CD4-positive, alpha-beta memory T cell (primary cell): ENCODE measurements at regions of chr7 and their contacts with region 1.

Region 1: GRCh38 chr7:148940702-148941597 is 56.9 kb upstream of the EZH2 start:
- DNase-seq: peak; percentile 75 to 84 (median 80)
- H3K4me3 ChIP-seq: peak overlapping the region; percentile 54 to 75
- H3K4me3 Mint-ChIP-seq: peak overlapping the region; percentile 93 to 97 (median 96)
- H3K27ac ChIP-seq: peak overlapping the region; percentile 90
- H3K27ac Mint-ChIP-seq: peak overlapping the region; percentile 91 to 99 (median 98)
- H3K4me1 ChIP-seq: peaks cover 21% of the 10 kb centered on the region
- H3K4me1 Mint-ChIP-seq: peaks cover 6 to 25% (median 13%) of the 10 kb centered on the region in 4 donors
- H3K27me3 ChIP-seq: no peaks in the 10 kb centered on the region
- H3K27me3 Mint-ChIP-seq: no peaks in the 10 kb centered on the region

Region 2: GRCh38 chr7:148856891-148857290 is 84.1 kb before region 1 on chr7:
- CTCF ChIA-PET with region 1: interaction called, 34 read pairs
- POLR2A ChIA-PET with region 1: interaction called, 5 read pairs
- intact Hi-C with region 1: loop called (anchors 1 kb)
- DNase-seq: no peak
- H3K4me3 ChIP-seq: no peak overlapping the region
- H3K4me3 Mint-ChIP-seq: no peak overlapping the region
- H3K27ac ChIP-seq: no peak overlapping the region
- H3K27ac Mint-ChIP-seq: no peak overlapping the region
- H3K4me1 ChIP-seq: peaks cover 20% of the 10 kb centered on the region
- H3K4me1 Mint-ChIP-seq: peaks cover 11 to 21% (median 16%) of the 10 kb centered on the region in 4 donors
- H3K27me3 ChIP-seq: no peaks in the 10 kb centered on the region
- H3K27me3 Mint-ChIP-seq: no peaks in the 10 kb centered on the region

Region 3: GRCh38 chr7:148898845-148899484 is 42.0 kb before region 1 on chr7:
- CTCF ChIA-PET with region 1: no interaction called
- POLR2A ChIA-PET with region 1: no interaction called
- intact Hi-C with region 1: no loop called
- DNase-seq: no peak
- H3K4me3 ChIP-seq: no peak overlapping the region
- H3K4me3 Mint-ChIP-seq: no peak overlapping the region
- H3K27ac ChIP-seq: no peak overlapping the region
- H3K27ac Mint-ChIP-seq: peak overlapping the region in 1 of 7 donors; percentile 15
- H3K4me1 ChIP-seq: no peaks in the 10 kb centered on the region
- H3K4me1 Mint-ChIP-seq: no peaks in the 10 kb centered on the region
- H3K27me3 ChIP-seq: no peaks in the 10 kb centered on the region
- H3K27me3 Mint-ChIP-seq: peaks cover 0 to 2% of the 10 kb centered on the region in 2 donors

Region 4: GRCh38 chr7:148914208-148914777 is 26.7 kb before region 1 on chr7:
- CTCF ChIA-PET with region 1: interaction called, 7 read pairs
- POLR2A ChIA-PET with region 1: interaction called, 39 read pairs
- intact Hi-C with region 1: loop called (anchors 1 kb)
- DNase-seq: peak in 2 of 5 donors; percentile 12 to 58
- H3K4me3 ChIP-seq: peak overlapping the region; percentile 31 to 32
- H3K4me3 Mint-ChIP-seq: peak overlapping the region in 7 of 8 donors; percentile 37 to 85 (median 81)
- H3K27ac ChIP-seq: peak overlapping the region; percentile 56
- H3K27ac Mint-ChIP-seq: peak overlapping the region; percentile 63 to 96 (median 90)
- H3K4me1 ChIP-seq: peaks cover 52% of the 10 kb centered on the region
- H3K4me1 Mint-ChIP-seq: peaks cover 37 to 60% (median 48%) of the 10 kb centered on the region in 4 donors
- H3K27me3 ChIP-seq: no peaks in the 10 kb centered on the region
- H3K27me3 Mint-ChIP-seq: no peaks in the 10 kb centered on the region

Region 5: DNA sequence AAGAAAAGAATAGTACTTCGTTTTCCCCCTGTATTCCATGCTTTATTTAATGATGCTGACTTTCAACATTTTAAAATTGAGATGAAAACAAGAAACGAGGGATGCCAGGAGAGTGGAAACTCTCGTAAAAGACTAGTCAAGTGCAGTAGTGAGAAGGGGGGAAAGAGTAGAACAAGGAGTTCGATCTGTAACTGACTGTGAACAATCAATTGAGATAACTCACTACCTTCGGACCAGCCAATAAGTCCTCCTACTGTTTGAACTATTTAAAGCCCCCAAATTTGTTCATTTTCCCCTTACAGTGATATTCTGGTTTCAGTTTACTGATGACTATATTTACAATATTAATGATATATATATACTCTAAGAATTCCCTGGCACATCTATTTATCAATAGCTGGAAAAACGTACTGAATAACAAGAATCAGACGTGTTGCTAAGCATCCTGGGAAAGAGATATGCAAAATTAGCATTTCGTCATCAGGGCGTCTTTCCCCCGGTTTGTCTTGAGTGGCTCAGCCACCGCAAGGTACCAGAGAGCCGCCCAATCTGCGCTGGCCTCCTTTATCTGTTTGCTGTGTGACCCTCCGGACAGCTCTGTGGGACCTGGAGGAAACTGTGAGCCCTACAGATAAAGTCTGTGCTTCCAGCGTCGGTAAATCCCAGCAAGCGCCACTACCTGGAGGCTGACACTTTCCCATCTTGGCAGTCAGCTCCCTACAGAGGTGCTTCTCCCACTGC is 46.2 kb after region 1 on chr7:
- CTCF ChIA-PET with region 1: interaction called, 7 read pairs
- POLR2A ChIA-PET with region 1: interaction called, 9 read pairs
- intact Hi-C with region 1: loop called (anchors 2 kb)
- DNase-seq: peak; percentile 89 to 91 (median 90)
- H3K4me3 ChIP-seq: peak overlapping the region; percentile 95 to 98
- H3K4me3 Mint-ChIP-seq: peak overlapping the region; percentile 93 to 99 (median 98)
- H3K27ac ChIP-seq: peak overlapping the region; percentile 83
- H3K27ac Mint-ChIP-seq: peak overlapping the region; percentile 96 to 100 (median 98)
- H3K4me1 ChIP-seq: peaks cover 46% of the 10 kb centered on the region
- H3K4me1 Mint-ChIP-seq: peaks cover 27 to 59% (median 45%) of the 10 kb centered on the region in 4 donors
- H3K27me3 ChIP-seq: no peaks in the 10 kb centered on the region
- H3K27me3 Mint-ChIP-seq: peaks cover 2 to 5% of the 10 kb centered on the region in 2 donors